Ovary (tissue), 10 donors: ENCODE measurements at regions of chr13 and their contacts with region 1.

Region 1: GRCh38 chr13:99269627-99270241 is 11.6 kb upstream of the GPR18 start:
- DNase-seq: peak in 1 of 5 donors; percentile 30
- H3K4me3 ChIP-seq: no peak overlapping the region
- H3K27ac ChIP-seq: no peak overlapping the region
- H3K4me1 ChIP-seq: no peaks in the 10 kb centered on the region
- H3K27me3 ChIP-seq: no peaks in the 10 kb centered on the region
- CTCF ChIP-seq: peak; percentile 20 to 86 (median 71)
- EP300 ChIP-seq: no peak
- POLR2A ChIP-seq: no peak

Region 2: GRCh38 chr13:99228737-99229691 is 40.7 kb before region 1 on chr13:
- intact Hi-C with region 1: no loop called
- DNase-seq: no peak
- H3K4me3 ChIP-seq: no peak overlapping the region
- H3K27ac ChIP-seq: no peak overlapping the region
- H3K4me1 ChIP-seq: peaks cover 4% of the 10 kb centered on the region
- H3K27me3 ChIP-seq: no peaks in the 10 kb centered on the region
- CTCF ChIP-seq: no peak
- EP300 ChIP-seq: no peak
- POLR2A ChIP-seq: no peak

Region 3: DNA sequence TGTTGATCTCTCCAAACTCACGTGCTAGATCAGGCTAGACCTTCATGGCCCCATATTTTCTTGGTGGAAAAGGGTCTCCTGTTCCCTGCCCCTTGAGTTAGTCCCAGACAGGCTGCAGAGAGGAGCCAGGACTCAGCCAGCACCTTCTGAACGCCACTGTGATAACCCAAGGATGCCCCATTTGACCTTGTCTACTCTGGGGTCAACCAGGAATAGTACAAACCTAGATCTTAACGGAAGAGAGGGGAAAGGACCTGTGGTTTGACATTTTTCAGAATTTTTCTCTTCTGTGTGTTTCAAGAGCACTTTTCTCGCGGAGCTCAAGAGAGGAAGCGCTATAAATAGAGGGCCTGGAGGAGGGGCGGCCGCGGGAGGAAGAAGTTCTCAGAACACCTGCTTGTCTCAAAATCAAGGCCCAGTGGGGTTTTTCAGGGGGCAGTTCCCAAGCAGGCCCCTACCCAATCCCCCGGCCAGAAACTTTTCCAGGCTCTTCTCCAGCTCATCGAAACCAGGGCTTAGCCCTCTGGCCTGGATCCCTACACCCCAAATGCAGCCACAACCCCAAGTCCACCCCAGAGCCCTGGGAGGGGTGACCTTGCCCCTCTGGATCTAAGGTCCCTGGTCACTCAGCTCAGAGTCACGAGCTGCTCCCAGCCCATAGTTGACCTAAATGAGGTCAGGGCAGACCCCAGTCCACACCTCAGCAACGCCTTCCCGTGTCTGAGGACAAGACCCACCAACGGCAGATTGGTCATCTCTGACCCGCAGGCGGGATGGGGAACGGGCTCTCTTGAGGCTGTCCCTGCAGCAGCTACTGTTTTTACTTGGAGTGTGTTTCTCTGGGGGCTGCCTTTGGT is 156.0 kb after region 1 on chr13:
- intact Hi-C with region 1: loop called in 2 of 4 experiments (anchors 5 kb)
- DNase-seq: no peak
- H3K4me3 ChIP-seq: no peak overlapping the region
- H3K27ac ChIP-seq: no peak overlapping the region
- H3K4me1 ChIP-seq: no peaks in the 10 kb centered on the region
- H3K27me3 ChIP-seq: no peaks in the 10 kb centered on the region
- CTCF ChIP-seq: no peak
- EP300 ChIP-seq: no peak
- POLR2A ChIP-seq: no peak

Region 4: GRCh38 chr13:99436686-99437416 is 167.1 kb after region 1 on chr13:
- intact Hi-C with region 1: loop called (anchors 2 to 5 kb)
- DNase-seq: peak; percentile 78 to 91 (median 87)
- H3K4me3 ChIP-seq: no peak overlapping the region
- H3K27ac ChIP-seq: no peak overlapping the region
- H3K4me1 ChIP-seq: peaks cover 9% of the 10 kb centered on the region
- H3K27me3 ChIP-seq: no peaks in the 10 kb centered on the region
- CTCF ChIP-seq: peak; percentile 99
- EP300 ChIP-seq: no peak
- POLR2A ChIP-seq: no peak